ENCODE measurements at regions of chr4 and their contacts with region 1.

Region 1: GRCh38 chr4:72701987-72702819 is 133.2 kb upstream of the ADAMTS3 start:
- DNase-seq: peak; percentile 56
- H3K4me3 Mint-ChIP-seq: peak overlapping the region; percentile 68
- H3K27ac Mint-ChIP-seq: no peak overlapping the region
- H3K4me1 Mint-ChIP-seq: no peaks in the 10 kb centered on the region
- H3K27me3 Mint-ChIP-seq: peaks cover 2% of the 10 kb centered on the region

Region 2: GRCh38 chr4:72817012-72817411 is 114.8 kb after region 1 on chr4:
- CTCF ChIA-PET with region 1: no interaction called
- intact Hi-C with region 1: loop called (anchors 5 kb)
- DNase-seq: no peak
- H3K4me3 Mint-ChIP-seq: no peak overlapping the region
- H3K27ac Mint-ChIP-seq: no peak overlapping the region
- H3K4me1 Mint-ChIP-seq: no peaks in the 10 kb centered on the region
- H3K27me3 Mint-ChIP-seq: peaks cover 6% of the 10 kb centered on the region

Region 3: DNA sequence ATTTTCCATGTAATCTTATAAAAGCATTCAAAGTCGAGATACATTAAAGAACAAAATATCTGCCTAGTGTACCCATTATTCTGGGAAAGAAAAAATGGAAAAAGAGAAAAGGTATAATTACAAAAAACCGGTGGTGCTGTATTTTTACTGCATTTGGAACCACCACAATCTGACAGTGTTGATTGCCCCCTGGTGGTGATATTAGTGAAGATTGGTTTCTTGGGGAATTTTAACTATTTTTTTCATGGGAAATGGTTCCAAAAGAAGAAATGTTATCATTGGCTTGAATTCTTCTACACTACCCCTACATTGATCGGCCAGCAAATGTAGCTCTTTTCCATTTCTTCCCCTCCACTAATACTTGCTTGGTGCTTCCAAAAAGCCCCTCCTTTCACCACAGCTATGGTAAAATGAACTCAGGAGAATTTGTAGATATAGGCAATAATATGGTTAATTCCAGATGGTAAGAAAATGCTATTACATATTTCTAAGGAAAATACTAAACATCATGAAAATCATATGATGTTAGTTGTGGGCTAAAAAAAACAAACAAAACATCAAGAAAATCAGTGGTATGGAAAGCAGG is 317.4 kb after region 1 on chr4:
- CTCF ChIA-PET with region 1: interaction called, 5 read pairs
- intact Hi-C with region 1: loop called (anchors 1 kb)
- DNase-seq: peak; percentile 19
- H3K4me3 Mint-ChIP-seq: no peak overlapping the region
- H3K27ac Mint-ChIP-seq: no peak overlapping the region
- H3K4me1 Mint-ChIP-seq: peaks cover 1% of the 10 kb centered on the region
- H3K27me3 Mint-ChIP-seq: peaks cover 2% of the 10 kb centered on the region

Region 4: GRCh38 chr4:73308286-73308685 is 606.1 kb after region 1 on chr4:
- CTCF ChIA-PET with region 1: no interaction called
- intact Hi-C with region 1: loop called (anchors 2 kb)
- DNase-seq: no peak
- H3K4me3 Mint-ChIP-seq: no peak overlapping the region
- H3K27ac Mint-ChIP-seq: no peak overlapping the region
- H3K4me1 Mint-ChIP-seq: no peaks in the 10 kb centered on the region
- H3K27me3 Mint-ChIP-seq: no peaks in the 10 kb centered on the region

Region 5: GRCh38 chr4:73653695-73654106 is 951.5 kb after region 1 on chr4:
- CTCF ChIA-PET with region 1: no interaction called
- intact Hi-C with region 1: loop called (anchors 2 kb)
- DNase-seq: peak; percentile 11
- H3K4me3 Mint-ChIP-seq: no peak overlapping the region
- H3K27ac Mint-ChIP-seq: no peak overlapping the region
- H3K4me1 Mint-ChIP-seq: no peaks in the 10 kb centered on the region
- H3K27me3 Mint-ChIP-seq: peaks cover 10% of the 10 kb centered on the region